A673 (cell line): ENCODE measurements at regions of chr2 and their contacts with region 1.

Region 1: DNA sequence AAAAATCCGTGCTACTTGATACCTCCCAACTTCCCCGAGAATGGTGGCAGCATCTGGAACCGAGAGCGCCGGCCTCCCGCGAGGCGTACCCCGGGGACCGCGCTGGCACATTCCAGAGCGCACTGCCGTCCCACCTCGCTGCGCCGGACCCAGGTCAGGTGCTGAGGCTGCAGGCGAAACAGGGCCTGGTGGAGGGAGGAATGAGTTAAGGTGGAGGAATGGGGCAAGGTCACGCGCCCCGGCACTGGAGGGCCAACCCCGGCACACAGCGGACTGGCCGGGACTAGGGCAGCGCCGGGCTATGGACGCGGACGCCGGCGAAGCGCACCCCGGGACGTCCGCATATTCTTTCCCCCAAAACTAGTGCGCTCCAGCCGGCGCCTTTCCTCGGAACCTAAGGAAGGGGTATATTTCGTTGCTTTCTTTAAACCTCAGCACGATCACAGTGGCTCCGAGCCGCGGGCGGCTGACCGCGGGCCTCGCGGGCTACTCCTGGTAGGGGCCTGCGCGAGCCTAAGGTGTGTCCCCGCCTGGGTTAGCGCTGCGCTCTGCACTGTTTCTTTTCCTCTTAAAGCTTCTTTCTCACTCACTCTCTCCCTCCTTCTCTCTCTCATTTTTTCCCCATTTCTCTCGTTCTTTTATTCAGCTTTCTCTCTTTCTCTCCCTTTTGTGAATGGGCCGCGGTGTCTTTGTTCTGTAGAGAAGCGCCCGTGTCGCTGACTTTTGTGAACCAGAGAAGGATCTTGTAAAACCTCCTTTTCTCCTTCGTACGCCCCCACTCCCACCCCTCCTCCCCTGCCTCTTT is 2.1 kb upstream of the OTX1 start:
- DNase-seq: no peak
- H3K4me3 ChIP-seq: no peak overlapping the region
- H3K27ac ChIP-seq: no peak overlapping the region
- H3K4me1 ChIP-seq: peaks cover 7% of the 10 kb centered on the region
- H3K27me3 ChIP-seq: peaks cover 9% of the 10 kb centered on the region
- CTCF ChIP-seq: no peak

Region 2: DNA sequence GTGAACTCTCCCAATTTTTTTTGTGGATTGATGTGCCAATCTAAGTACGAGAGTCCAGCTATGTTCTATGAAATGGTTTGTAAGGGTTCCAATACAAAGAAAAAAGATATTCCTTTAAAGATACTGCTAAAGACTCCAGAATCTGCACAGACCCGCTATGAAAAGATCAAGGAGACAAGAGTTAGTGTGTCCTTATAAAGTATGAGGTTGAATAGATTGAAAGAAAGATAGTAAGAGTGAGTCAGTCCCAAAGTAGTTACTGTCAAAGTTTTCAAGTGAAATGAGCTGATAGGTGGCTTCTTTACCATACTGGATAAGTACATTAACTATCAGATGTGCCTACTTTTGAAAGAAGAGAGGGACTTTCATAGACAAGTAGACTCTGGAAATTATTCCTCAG is 360.9 kb before region 1 on chr2:
- CTCF ChIA-PET with region 1: no interaction called
- POLR2A ChIA-PET with region 1: no interaction called
- intact Hi-C with region 1: no loop called
- DNase-seq: no peak
- H3K4me3 ChIP-seq: no peak overlapping the region
- H3K27ac ChIP-seq: no peak overlapping the region
- H3K4me1 ChIP-seq: no peaks in the 10 kb centered on the region
- H3K27me3 ChIP-seq: peaks cover 43% of the 10 kb centered on the region
- CTCF ChIP-seq: no peak

Region 3: GRCh38 chr2:63378589-63378988 is 330.0 kb after region 1 on chr2:
- CTCF ChIA-PET with region 1: no interaction called
- POLR2A ChIA-PET with region 1: interaction called, 22 read pairs
- intact Hi-C with region 1: no loop called
- DNase-seq: peak; percentile 18
- H3K4me3 ChIP-seq: no peak overlapping the region
- H3K27ac ChIP-seq: no peak overlapping the region
- H3K4me1 ChIP-seq: no peaks in the 10 kb centered on the region
- H3K27me3 ChIP-seq: no peaks in the 10 kb centered on the region
- CTCF ChIP-seq: no peak